ENCODE measurements at regions of chr1 and their contacts with region 1.

Region 1: DNA sequence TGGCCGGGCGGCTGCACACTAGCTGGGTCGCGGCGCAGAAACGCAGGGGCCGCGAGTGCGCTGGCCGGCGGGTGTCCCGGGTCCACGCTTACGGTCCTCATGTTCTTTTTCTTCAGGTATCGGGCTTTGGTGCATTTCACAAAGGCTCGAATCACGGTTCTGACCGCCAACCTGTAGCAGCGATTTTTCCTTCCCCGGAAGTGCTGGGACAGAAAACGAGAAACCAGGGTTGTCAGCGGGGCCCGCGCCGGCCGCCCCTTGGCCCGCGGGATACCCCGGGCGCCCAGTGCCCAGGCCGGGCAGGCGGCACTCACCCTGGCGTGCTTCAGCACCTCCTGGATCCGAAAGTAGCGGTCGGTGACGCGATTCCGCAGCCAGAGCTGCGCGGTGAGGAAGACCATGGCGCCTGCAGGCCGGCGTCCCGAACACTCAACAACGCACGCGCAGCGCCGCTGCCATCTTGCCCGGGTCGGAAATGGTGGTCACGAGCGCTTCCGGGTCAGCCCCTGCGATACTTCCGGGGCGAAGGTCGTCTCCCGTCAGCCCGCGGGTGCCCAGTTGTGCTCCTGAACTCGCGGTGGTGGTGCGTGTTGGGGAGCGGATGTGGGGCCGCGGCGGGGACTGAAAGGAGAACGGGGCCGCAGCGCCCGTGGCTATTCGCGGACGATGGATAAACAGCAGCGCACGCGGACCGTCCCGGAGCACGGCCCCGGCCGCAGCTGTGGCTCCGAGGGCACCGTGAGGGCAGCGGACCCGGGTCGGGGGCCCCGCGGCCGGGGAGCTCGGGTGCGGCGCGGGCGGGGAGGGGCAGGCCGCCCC is at the start of gene MRPL20:
- DNase-seq: peak; percentile 97
- ATAC-seq: peak; percentile 97
- H3K4me3 Mint-ChIP-seq: peak within 1 kb of the TSS; percentile 96
- H3K27ac Mint-ChIP-seq: peak within 1 kb of the TSS; percentile 91
- H3K4me1 Mint-ChIP-seq: peaks cover 41% of the 10 kb centered on the region
- H3K27me3 Mint-ChIP-seq: no peaks in the 10 kb centered on the region
- CTCF ChIP-seq: no peak
- total RNA-seq, gene MRPL20: 127 to 129 TPM

Region 2: GRCh38 chr1:1291548-1292441 is 115.2 kb before region 1 on chr1:
- CTCF ChIA-PET with region 1: no interaction called
- POLR2A ChIA-PET with region 1: no interaction called
- intact Hi-C with region 1: no loop called
- DNase-seq: peak; percentile 84
- ATAC-seq: peak; percentile 87
- H3K4me3 Mint-ChIP-seq: no peak overlapping the region
- H3K27ac Mint-ChIP-seq: no peak overlapping the region
- H3K4me1 Mint-ChIP-seq: peaks cover 2% of the 10 kb centered on the region
- H3K27me3 Mint-ChIP-seq: no peaks in the 10 kb centered on the region
- CTCF ChIP-seq: peak; percentile 69

Region 3: DNA sequence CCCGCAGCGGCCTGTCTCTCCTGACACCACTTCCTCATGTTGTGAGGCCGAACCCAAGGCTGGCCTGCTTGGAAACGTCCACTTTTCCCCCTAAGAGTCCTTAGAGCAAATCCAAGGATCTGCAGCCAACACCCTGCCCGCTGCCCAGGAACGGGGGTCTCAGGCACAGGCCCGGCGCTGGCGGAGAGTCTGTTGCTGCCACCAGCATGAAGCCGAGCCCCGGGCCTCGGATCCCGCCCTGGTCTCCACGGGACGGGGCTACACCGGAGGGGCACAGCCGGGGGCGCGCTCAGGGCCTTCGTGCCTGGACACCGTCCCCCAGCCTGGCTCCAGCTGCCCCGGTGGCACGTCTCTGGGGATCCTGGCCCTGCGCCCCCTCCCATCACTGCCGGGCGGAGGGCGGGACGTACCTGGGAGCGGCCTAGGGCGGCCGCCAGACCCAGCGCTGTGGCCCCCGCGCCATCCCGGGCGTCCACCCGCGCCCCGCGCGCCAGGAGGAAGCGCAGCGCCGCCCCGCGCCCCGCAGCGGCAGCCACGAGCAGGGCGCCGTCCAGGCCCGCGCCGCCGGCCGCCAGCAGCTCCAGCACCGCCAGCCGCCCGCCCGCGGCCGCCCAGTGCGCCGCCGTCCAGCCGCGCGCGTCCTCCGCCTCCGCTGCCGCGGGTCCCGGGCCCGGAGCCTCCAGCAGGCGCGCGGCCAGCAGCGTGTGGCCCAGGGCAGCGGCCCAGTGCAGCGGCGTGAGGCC is 12.8 kb after region 1 on chr1:
- CTCF ChIA-PET with region 1: interaction called, 3 read pairs
- POLR2A ChIA-PET with region 1: interaction called, 10 read pairs
- intact Hi-C with region 1: no loop called
- DNase-seq: no peak
- ATAC-seq: peak; percentile 56
- H3K4me3 Mint-ChIP-seq: no peak overlapping the region
- H3K27ac Mint-ChIP-seq: no peak overlapping the region
- H3K4me1 Mint-ChIP-seq: peaks cover 17% of the 10 kb centered on the region
- H3K27me3 Mint-ChIP-seq: peaks cover 12% of the 10 kb centered on the region
- CTCF ChIP-seq: no peak

Region 4: DNA sequence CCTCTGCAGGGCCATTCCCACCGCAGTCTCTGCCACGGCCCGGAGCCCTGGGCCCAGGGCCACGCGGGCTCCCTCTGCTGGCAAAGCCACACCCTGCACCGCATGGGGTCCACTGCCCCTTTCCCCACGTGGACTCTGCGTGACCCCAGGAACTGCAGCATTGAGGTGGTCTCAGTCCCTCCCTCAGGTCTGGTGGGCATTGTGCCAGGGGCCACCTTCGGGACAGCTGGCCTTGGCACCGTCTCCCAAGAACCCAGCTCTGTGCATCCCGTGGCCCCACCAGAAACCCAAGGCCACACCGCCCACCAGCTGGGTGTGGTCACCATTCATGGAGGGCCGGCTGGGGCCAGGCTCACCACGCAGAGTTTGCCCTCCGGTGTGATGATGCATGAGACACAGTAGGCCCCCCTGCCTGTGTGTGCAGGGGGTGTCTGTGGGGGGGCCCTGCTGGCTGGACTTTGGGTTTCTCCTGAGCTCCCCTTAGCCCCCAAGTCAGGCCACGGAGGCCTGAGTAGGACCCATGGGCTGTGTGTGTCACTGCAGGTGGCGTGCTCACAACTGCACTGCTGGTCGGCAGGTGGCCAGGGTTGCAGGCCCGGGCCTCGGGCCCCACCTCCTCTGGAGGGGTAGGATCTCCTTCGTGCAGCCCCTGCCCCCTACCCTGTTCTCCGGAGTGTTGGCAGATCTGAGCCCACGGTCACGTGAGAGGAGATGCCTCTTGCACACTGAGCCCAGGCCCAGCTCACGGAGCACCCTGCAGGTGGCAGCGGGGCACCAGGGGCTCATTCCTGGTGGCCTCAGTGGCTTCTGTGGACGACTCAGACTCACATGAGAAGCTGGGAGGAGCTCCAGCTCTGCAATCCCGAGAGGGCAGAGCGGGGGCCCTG is 34.2 kb after region 1 on chr1:
- CTCF ChIA-PET with region 1: interaction called, 8 read pairs
- POLR2A ChIA-PET with region 1: interaction called, 13 read pairs
- intact Hi-C with region 1: no loop called
- DNase-seq: peak; percentile 65
- ATAC-seq: peak; percentile 94
- H3K4me3 Mint-ChIP-seq: no peak overlapping the region
- H3K27ac Mint-ChIP-seq: no peak overlapping the region
- H3K4me1 Mint-ChIP-seq: peaks cover 6% of the 10 kb centered on the region
- H3K27me3 Mint-ChIP-seq: peaks cover 12% of the 10 kb centered on the region
- CTCF ChIP-seq: peak; percentile 90